Colonic mucosa (tissue), 4 donors: ENCODE measurements at regions of chr17 and their contacts with region 1.

Region 1: GRCh38 chr17:38667099-38667786 is 7.5 kb downstream of the EPOP start:
- DNase-seq: peak; percentile 65
- H3K4me3 ChIP-seq: no peak overlapping the region
- H3K27ac ChIP-seq: no peak overlapping the region
- H3K4me1 ChIP-seq: no peaks in the 10 kb centered on the region
- H3K27me3 ChIP-seq: peaks cover 25% of the 10 kb centered on the region
- CTCF ChIP-seq: peak; percentile 99

Region 2: GRCh38 chr17:38509008-38509771 is 158.1 kb before region 1 on chr17:
- intact Hi-C with region 1: no loop called
- DNase-seq: peak; percentile 74
- H3K4me3 ChIP-seq: no peak overlapping the region
- H3K27ac ChIP-seq: no peak overlapping the region
- H3K4me1 ChIP-seq: no peaks in the 10 kb centered on the region
- H3K27me3 ChIP-seq: peaks cover 22% of the 10 kb centered on the region
- CTCF ChIP-seq: peak; percentile 57

Region 3: DNA sequence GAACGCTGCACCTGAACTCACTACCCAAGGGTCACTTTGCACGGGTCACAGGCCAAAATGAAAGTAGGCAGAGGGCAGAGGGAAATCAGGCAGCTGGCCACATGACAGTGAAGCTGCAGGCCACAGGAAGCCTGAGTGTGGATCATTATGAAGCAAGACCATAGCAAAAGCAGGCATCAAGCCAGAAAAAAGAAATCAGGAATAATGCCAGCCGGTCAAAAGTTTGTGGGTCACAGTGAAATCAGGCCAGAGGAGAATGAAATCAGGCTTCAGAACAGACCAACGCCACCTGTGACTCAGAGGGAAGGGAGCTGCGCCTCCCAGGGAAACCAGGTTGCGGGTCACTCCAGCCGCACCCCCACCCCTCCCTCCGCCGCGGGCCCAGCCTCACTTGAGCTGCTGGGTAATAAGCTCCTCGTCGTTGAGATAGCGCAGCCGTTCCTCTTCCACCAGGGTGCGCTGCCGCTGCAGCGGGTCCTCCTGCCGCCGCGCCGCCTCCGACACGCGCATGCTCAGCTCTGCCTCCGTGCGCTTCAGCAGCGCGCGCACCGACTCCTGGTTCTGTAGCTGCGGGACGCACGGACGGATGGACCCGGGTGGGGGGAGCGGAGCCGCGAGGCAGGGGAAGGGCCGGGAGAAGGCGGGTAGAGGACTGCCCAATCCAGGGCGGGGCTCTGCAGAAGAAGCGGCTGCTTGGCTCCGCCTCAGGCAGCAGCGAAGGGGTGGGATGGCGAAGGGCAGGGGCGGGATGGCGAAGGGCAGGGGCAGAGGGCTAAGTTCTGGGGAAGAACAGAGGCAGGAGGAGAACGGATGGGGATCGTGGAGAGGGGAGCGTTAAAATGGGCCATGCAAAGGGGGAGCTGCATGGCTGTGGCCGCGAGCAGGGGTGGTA is 109.2 kb before region 1 on chr17:
- intact Hi-C with region 1: loop called (anchors 5 kb)
- DNase-seq: peak; percentile 93
- H3K4me3 ChIP-seq: peak overlapping the region; percentile 32
- H3K27ac ChIP-seq: no peak overlapping the region
- H3K4me1 ChIP-seq: peaks cover 12% of the 10 kb centered on the region
- H3K27me3 ChIP-seq: peaks cover 28% of the 10 kb centered on the region
- CTCF ChIP-seq: peak; percentile 93

Region 4: GRCh38 chr17:38584350-38584925 is 82.8 kb before region 1 on chr17:
- intact Hi-C with region 1: loop called (anchors 10 kb)
- DNase-seq: peak; percentile 63
- H3K4me3 ChIP-seq: no peak overlapping the region
- H3K27ac ChIP-seq: no peak overlapping the region
- H3K4me1 ChIP-seq: peaks cover 9% of the 10 kb centered on the region
- H3K27me3 ChIP-seq: peaks cover 9% of the 10 kb centered on the region
- CTCF ChIP-seq: peak; percentile 98

Region 5: DNA sequence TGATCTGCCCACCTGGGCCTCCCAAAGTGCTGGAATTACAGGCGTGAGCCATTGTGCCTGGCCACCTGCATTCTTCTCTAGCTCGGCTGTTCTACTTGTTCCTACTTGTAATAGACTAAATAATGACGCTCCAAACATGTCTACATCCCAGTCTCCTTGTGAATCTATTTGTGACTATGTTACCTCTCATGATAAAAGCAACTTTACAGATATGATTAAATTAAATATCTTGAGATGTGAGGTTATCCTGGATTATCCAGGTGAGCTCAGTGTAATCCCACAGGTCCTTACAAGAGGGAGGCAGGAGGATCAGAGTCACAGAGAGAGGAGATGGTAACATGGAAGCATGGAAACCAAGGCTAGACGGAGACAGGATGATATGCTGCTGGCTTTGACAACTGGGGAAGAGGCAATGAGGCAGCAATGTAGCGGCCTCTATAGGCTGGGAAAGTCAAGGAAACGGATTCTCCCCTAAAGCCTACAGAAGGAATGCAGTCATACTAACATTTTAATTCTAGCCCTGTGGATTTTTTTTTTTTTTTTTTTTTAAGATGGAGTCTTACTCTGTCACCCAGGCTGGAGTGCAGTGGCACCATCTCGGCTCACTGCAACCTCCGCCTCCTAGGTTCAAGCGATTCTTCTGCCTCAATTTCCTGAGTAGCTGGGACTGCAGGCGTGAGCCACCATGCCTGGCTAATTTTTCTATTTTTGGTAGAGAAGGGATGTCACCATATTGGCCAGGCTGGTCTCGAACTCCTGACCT is 197.6 kb after region 1 on chr17:
- intact Hi-C with region 1: no loop called
- DNase-seq: no peak
- H3K4me3 ChIP-seq: no peak overlapping the region
- H3K27ac ChIP-seq: no peak overlapping the region
- H3K4me1 ChIP-seq: no peaks in the 10 kb centered on the region
- H3K27me3 ChIP-seq: no peaks in the 10 kb centered on the region
- CTCF ChIP-seq: no peak